B cell (primary cell): ENCODE measurements at regions of chr11 and their contacts with region 1.

Region 1: DNA sequence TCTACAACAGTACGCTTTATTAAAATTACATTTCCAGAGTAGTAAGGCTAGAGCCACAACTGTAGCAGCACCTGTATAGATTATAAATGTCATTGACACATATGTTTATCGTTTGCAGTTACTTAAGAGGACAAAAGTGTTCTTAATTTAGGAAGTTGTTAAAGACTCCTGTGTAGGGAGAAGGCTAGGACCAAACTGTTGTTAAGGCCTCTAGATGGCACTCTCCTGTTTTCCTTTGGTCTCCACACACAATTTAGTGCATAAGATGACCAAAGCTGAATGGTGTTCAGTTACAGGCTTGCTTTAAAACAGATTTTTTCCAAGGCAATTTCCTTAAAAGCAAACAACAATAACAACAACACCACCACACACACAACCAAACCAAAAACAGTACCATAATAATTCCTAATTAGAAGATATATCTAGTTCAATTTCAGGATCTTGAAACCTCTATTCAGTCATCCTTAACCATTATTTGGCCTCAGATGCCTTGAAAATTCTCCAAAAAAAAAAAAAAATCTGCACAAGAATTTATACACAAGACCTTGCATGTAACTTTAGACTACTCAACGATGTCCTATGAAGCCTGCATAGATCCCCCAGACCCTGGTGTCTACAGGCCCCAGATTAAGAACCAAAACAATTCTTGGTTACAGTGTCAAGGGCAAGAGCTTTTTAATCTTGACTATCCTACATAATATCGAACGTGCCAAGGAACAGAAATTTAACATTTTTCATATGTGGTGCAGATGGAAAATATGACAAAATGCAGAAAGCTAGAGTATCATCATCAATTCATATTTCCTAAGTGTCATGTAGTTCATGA is 42.6 kb upstream of the APOA1 start:
- DNase-seq: peak; percentile 71
- ATAC-seq: peak; percentile 49
- H3K4me3 ChIP-seq: no peak overlapping the region
- H3K4me3 Mint-ChIP-seq: no peak overlapping the region
- H3K27ac ChIP-seq: no peak overlapping the region
- H3K27ac Mint-ChIP-seq: no peak overlapping the region
- H3K4me1 ChIP-seq: no peaks in the 10 kb centered on the region
- H3K4me1 Mint-ChIP-seq: peaks cover 10% of the 10 kb centered on the region
- H3K27me3 ChIP-seq: no peaks in the 10 kb centered on the region
- H3K27me3 Mint-ChIP-seq: no peaks in the 10 kb centered on the region
- CTCF ChIP-seq: peak; percentile 75

Region 2: GRCh38 chr11:116412118-116412889 is 467.7 kb before region 1 on chr11:
- CTCF ChIA-PET with region 1: no interaction called
- POLR2A ChIA-PET with region 1: no interaction called
- intact Hi-C with region 1: no loop called
- DNase-seq: no peak
- ATAC-seq: no peak
- H3K4me3 ChIP-seq: no peak overlapping the region
- H3K4me3 Mint-ChIP-seq: no peak overlapping the region
- H3K27ac ChIP-seq: no peak overlapping the region
- H3K27ac Mint-ChIP-seq: no peak overlapping the region
- H3K4me1 ChIP-seq: no peaks in the 10 kb centered on the region
- H3K4me1 Mint-ChIP-seq: no peaks in the 10 kb centered on the region
- H3K27me3 ChIP-seq: peaks cover 0 to 2% (median 0%) of the 10 kb centered on the region in 4 experiments
- H3K27me3 Mint-ChIP-seq: peaks cover 5% of the 10 kb centered on the region
- CTCF ChIP-seq: no peak

Region 3: GRCh38 chr11:116890193-116890592 is 10.2 kb after region 1 on chr11:
- CTCF ChIA-PET with region 1: interaction called, 11 read pairs
- POLR2A ChIA-PET with region 1: no interaction called
- intact Hi-C with region 1: no loop called
- DNase-seq: no peak
- ATAC-seq: no peak
- H3K4me3 ChIP-seq: no peak overlapping the region
- H3K4me3 Mint-ChIP-seq: no peak overlapping the region
- H3K27ac ChIP-seq: peak overlapping the region in 1 of 2 donors; percentile 50
- H3K27ac Mint-ChIP-seq: peak overlapping the region; percentile 16
- H3K4me1 ChIP-seq: peaks cover 3 to 6% of the 10 kb centered on the region in 2 donors
- H3K4me1 Mint-ChIP-seq: peaks cover 11% of the 10 kb centered on the region
- H3K27me3 ChIP-seq: no peaks in the 10 kb centered on the region
- H3K27me3 Mint-ChIP-seq: no peaks in the 10 kb centered on the region
- CTCF ChIP-seq: no peak

Region 4: DNA sequence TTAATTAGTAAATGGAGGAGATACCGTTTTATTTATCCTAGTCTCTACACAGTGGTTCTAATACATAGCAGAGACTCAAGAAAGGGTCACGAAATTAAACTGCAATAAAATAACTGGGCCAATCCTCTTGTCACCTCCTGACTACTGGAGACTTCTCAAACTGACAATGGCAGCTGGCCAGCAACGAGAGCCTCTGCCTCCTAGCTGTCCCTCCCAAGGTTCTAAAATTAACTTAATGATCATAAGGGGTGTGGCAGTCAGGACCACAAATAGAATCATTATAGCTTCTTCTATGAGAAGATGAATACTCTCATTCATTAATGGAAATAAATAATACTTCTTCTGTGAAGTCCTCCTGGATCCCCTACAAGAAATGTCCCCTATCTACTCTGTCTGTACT is 21.2 kb after region 1 on chr11:
- CTCF ChIA-PET with region 1: interaction called, 4 read pairs
- POLR2A ChIA-PET with region 1: no interaction called
- intact Hi-C with region 1: loop called (anchors 2 kb)
- DNase-seq: no peak
- ATAC-seq: no peak
- H3K4me3 ChIP-seq: no peak overlapping the region
- H3K4me3 Mint-ChIP-seq: no peak overlapping the region
- H3K27ac ChIP-seq: no peak overlapping the region
- H3K27ac Mint-ChIP-seq: no peak overlapping the region
- H3K4me1 ChIP-seq: no peaks in the 10 kb centered on the region
- H3K4me1 Mint-ChIP-seq: peaks cover 12% of the 10 kb centered on the region
- H3K27me3 ChIP-seq: no peaks in the 10 kb centered on the region
- H3K27me3 Mint-ChIP-seq: no peaks in the 10 kb centered on the region
- CTCF ChIP-seq: no peak

Region 5: GRCh38 chr11:117117681-117118080 is 237.7 kb after region 1 on chr11:
- CTCF ChIA-PET with region 1: interaction called, 6 read pairs
- POLR2A ChIA-PET with region 1: interaction called, 12 read pairs
- intact Hi-C with region 1: no loop called
- DNase-seq: no peak
- ATAC-seq: no peak
- H3K4me3 ChIP-seq: no peak overlapping the region
- H3K4me3 Mint-ChIP-seq: no peak overlapping the region
- H3K27ac ChIP-seq: no peak overlapping the region
- H3K27ac Mint-ChIP-seq: no peak overlapping the region
- H3K4me1 ChIP-seq: no peaks in the 10 kb centered on the region
- H3K4me1 Mint-ChIP-seq: peaks cover under 1% of the 10 kb centered on the region
- H3K27me3 ChIP-seq: no peaks in the 10 kb centered on the region
- H3K27me3 Mint-ChIP-seq: no peaks in the 10 kb centered on the region
- CTCF ChIP-seq: no peak